ENCODE measurements at regions of chr10 and their contacts with region 1.

Region 1: DNA sequence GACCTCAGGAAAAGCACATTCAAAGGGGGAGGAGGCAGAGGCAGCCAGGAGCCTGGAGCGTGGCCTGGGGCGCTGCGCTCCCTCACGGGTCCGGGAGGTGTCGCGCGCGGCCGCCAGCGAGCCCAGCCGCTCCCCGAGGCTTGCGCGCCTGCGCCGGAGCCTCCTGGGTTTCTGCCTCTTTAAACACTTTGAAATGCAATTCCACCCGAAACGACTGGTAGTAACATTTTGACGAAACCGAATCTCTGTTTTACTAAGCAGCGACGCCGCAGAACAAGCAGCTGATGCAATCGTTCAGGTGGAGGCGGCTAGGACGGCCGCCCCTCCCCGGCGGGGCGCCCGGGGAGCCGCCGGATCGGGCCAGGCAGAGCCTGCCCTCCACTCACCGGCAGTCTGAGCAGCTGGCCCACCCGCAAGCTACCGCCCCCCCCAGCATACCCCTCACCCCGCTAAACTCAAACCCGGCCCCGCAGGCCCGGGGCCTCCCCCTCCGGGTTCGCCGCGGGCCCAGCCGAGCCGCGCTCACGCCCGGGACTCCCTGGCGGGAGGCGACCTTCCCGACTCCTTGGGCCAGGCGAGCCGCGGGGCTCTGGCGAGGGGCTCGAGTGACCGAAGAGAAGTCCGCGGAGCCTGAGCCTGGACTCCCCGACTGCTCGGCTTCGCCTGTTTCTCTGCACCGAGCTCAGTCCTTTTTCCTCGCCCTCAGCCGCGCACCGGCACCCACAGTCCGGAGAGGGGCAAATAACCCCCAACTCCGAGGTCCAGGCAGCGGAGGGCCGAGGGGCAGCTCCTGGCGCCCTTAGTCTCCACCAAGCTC is 3.2 kb downstream of the MKX start:
- DNase-seq: peak; percentile 73
- H3K4me3 Mint-ChIP-seq: peak overlapping the region; percentile 65
- H3K27ac Mint-ChIP-seq: no peak overlapping the region
- H3K4me1 Mint-ChIP-seq: peaks cover 34% of the 10 kb centered on the region
- H3K27me3 Mint-ChIP-seq: peaks cover 63% of the 10 kb centered on the region

Region 2: DNA sequence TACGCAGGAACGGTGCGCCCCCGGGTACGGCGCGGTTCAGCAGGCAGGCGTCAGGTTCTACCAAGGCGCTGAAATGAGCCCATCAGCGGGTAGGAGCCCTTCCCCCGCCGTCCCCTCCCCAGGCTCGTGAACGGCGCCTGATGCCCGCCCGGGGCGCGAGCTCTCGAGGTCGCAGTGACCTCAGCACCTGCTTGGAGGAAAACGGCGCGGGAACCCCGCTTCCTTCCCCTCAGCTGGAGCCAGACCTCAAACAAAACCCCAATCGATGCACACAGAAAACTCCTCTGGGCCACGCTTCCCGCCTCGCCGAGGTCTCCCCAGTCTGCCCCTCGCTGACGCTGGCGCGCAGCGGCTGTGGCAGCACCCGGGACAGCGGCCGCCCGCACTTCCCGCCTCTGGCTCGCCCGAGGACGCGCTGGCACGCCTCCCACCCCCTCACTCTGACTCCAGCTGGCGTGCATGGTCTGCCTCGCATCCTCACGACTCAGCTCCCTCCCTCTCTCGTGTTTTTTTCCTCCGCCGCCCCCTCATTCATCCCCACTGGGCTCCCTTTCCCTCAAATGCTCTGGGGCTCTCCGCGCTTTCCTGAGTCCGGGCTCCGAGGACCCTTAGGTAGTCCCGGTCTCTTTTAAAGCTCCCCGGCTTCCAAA is 1526.3 kb before region 1 on chr10:
- intact Hi-C with region 1: loop called (anchors 2 kb)
- DNase-seq: no peak
- H3K4me3 Mint-ChIP-seq: no peak overlapping the region
- H3K27ac Mint-ChIP-seq: peak overlapping the region; percentile 55
- H3K4me1 Mint-ChIP-seq: peaks cover 15% of the 10 kb centered on the region
- H3K27me3 Mint-ChIP-seq: peaks cover 82% of the 10 kb centered on the region

Region 3: DNA sequence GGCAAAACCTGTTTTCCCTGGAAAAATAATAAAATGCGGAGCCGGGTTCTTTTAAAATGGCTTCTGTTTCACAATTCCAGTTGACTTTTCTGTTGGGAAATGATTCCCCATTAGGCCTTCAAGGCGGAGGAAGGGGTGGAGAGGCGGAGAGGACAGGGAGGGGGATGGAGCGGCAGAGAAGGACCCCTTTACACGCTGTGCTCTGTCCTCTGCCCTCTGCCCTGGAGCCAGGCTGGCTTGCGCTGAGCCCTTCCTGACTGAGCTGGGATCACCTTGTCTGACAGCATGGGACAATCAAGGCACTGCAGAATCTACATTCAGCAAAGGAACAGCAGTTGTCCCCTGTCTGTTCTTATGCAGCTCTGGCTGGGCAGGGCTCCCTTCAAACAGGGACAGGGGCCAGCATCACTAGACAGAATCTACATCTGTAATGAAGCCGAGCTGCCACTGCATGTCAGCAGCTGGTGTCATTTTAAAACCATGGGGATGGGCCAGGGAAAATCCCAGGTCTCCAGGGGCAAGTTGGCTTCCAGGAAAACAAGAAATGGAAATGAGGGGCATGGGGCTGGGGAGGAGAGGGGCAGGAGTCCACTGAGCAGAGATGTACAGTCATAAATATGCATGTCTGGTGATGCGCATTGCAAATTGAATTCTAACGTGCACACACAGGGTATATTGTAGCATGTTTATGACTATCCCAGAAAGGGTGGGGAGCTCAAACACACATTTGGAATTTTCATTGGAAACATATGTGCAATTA is 116.8 kb before region 1 on chr10:
- intact Hi-C with region 1: no loop called
- DNase-seq: no peak
- H3K4me3 Mint-ChIP-seq: no peak overlapping the region
- H3K27ac Mint-ChIP-seq: no peak overlapping the region
- H3K4me1 Mint-ChIP-seq: no peaks in the 10 kb centered on the region
- H3K27me3 Mint-ChIP-seq: peaks cover 9% of the 10 kb centered on the region

Region 4: GRCh38 chr10:27998254-27999004 is 256.0 kb after region 1 on chr10:
- intact Hi-C with region 1: loop called (anchors 5 kb)
- DNase-seq: no peak
- H3K4me3 Mint-ChIP-seq: peak overlapping the region; percentile 74
- H3K27ac Mint-ChIP-seq: no peak overlapping the region
- H3K4me1 Mint-ChIP-seq: peaks cover 14% of the 10 kb centered on the region
- H3K27me3 Mint-ChIP-seq: peaks cover 48% of the 10 kb centered on the region

Region 5: DNA sequence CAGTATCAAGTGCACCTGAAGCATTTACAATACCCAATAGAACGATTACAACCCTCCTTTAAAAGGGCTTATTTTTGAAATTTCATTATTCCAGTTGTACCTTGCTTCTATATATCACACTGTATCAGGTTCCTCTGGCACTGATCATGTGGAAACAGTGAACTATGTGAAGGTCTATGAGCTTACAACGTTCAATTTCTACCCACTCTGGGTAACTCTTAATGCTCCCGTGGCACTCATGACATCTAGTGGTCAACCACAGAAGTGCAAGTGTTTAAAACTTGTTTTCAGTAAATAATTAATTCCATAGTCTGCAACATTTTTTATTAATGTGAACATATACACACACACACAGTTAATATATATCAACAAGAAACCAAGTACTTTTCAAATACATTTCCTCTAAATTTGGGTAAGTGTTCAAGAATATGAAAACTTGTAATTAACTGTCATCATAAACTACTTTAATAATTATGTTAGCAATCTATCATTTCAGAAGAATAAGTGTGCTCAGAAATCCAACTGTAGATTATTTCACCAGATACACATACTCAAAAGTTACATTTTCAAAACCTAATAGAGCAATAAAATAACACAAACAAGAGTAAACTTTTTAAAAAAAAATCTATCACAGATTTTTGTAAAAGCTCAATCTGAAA is 499.5 kb after region 1 on chr10:
- intact Hi-C with region 1: loop called (anchors 1 kb)
- DNase-seq: peak; percentile 4
- H3K4me3 Mint-ChIP-seq: no peak overlapping the region
- H3K27ac Mint-ChIP-seq: no peak overlapping the region
- H3K4me1 Mint-ChIP-seq: no peaks in the 10 kb centered on the region
- H3K27me3 Mint-ChIP-seq: no peaks in the 10 kb centered on the region

Region 6: DNA sequence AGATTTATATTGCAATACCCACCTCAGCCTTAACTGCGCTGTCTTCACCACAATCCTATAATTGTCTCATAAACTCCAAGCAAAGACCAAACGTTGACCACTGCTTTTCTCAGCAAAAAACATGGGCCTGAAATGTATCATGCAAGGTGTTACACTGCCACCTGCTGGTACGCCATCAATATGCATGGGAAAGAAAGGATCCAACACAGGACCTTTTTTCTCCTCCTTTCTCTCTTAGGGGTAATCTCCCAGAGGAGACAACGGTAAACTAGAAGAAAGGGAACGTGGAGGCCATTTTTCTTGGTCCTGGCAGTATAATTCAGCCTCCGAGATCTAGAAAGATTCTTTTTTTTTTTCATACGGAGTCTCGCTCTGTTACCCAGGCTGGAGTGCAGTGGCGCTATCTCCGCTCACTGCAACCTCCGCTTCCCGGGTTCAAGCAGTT is 639.5 kb after region 1 on chr10:
- intact Hi-C with region 1: loop called (anchors 2 kb)
- DNase-seq: peak; percentile 58
- H3K4me3 Mint-ChIP-seq: no peak overlapping the region
- H3K27ac Mint-ChIP-seq: no peak overlapping the region
- H3K4me1 Mint-ChIP-seq: peaks cover 24% of the 10 kb centered on the region
- H3K27me3 Mint-ChIP-seq: peaks cover 22% of the 10 kb centered on the region

Region 7: GRCh38 chr10:28676968-28677887 is 934.8 kb after region 1 on chr10 and contains the start of gene BAMBI:
- intact Hi-C with region 1: loop called (anchors 2 kb)
- DNase-seq: peak; percentile 90
- H3K4me3 Mint-ChIP-seq: peak within 1 kb of the TSS; percentile 82
- H3K27ac Mint-ChIP-seq: no peak within 1 kb of the TSS
- H3K4me1 Mint-ChIP-seq: peaks cover 27% of the 10 kb centered on the region
- H3K27me3 Mint-ChIP-seq: peaks cover 78% of the 10 kb centered on the region
- total RNA-seq, gene BAMBI: 0.23 and 0.81 TPM in 2 replicates

Measured in activated T-helper 1 cell treated with anti-CD3 and anti-CD28 coated beads, Interleukin-12 subunit alpha, Interleukin-12 subunit beta, Interleukin-2, Interleukin-4 antibody, amounts not matched to agents 30 ng/mL and 10 ng/mL and 1 ng/mL, durations not matched to agents 14 hours and 24 hours and 36 hours (primary cell).